AG04449 (cell line): ENCODE measurements at regions of chr5 and their contacts with region 1.

Region 1: DNA sequence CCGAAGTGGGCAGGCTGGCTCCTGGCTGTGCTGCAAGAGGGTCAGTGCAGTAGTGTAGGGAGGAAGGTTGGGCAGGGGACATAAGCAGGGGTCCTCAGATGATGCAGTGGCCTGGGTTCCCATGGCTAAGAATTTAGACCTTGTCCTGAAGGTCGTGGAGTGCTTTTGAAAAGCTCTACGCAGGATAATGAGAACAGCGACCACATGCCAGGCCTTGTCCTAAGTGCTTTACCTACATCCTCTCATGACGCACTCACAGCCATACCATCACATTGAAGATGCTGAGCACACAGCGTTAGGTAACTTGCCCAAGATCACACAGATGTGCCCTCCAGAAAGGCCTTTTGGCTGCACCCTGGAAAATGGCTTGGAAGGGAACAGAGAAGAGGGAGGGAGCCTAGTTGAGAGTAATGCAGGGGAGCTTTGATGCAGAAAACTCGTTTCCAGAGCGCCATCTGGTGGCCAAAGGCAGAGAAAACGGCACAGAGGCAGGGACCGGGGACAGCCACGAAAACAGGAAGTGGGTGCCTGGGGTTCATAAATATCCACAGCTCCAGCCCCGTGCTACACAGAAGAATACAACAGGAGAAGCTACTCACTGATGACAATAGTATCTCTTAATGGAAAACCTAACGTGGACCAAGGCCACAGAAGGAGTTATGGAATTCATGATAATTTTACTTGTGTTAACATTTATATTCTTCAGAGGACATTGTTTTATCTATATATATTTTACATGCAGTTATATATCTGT is 2.6 kb upstream of the PCDH12 start:
- DNase-seq: peak; percentile 16
- H3K4me3 ChIP-seq: no peak overlapping the region
- CTCF ChIP-seq: peak; percentile 87

Region 2: GRCh38 chr5:141664732-141665461 is 295.7 kb before region 1 on chr5:
- CTCF ChIA-PET with region 1: interaction called, 132 read pairs
- POLR2A ChIA-PET with region 1: no interaction called
- DNase-seq: no peak
- H3K4me3 ChIP-seq: no peak overlapping the region
- CTCF ChIP-seq: peak; percentile 90

Region 3: GRCh38 chr5:141883892-141884318 is 76.7 kb before region 1 on chr5:
- CTCF ChIA-PET with region 1: interaction called, 115 read pairs
- POLR2A ChIA-PET with region 1: no interaction called
- DNase-seq: no peak
- H3K4me3 ChIP-seq: no peak overlapping the region
- CTCF ChIP-seq: no peak

Region 4: DNA sequence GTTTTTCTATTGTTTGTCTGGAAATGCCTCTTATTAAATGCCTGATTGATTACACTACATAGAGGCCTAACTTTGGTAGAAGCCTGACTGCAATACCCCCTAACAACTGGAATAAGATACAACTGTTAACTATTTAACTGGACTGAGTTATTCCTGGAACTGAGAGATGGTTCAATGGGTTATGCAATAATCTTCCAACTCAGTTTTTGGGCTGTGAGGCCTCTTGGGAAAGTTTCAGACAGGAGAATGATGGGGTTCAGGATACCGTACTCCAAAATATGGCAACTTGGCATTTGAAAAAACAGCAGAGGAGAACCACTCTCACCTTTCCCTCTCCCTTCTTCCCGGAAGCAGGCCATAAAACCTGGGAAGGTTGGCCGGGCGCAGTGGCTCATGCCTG is 63.2 kb before region 1 on chr5:
- CTCF ChIA-PET with region 1: interaction called, 12 read pairs
- POLR2A ChIA-PET with region 1: no interaction called
- DNase-seq: no peak
- H3K4me3 ChIP-seq: no peak overlapping the region
- CTCF ChIP-seq: no peak

Region 5: GRCh38 chr5:141923448-141924352 is 36.9 kb before region 1 on chr5 and contains the start of gene DELE1:
- CTCF ChIA-PET with region 1: interaction called, 16 read pairs
- POLR2A ChIA-PET with region 1: no interaction called
- DNase-seq: peak; percentile 70
- H3K4me3 ChIP-seq: peak within 1 kb of the TSS; percentile 85
- CTCF ChIP-seq: no peak

Region 6: DNA sequence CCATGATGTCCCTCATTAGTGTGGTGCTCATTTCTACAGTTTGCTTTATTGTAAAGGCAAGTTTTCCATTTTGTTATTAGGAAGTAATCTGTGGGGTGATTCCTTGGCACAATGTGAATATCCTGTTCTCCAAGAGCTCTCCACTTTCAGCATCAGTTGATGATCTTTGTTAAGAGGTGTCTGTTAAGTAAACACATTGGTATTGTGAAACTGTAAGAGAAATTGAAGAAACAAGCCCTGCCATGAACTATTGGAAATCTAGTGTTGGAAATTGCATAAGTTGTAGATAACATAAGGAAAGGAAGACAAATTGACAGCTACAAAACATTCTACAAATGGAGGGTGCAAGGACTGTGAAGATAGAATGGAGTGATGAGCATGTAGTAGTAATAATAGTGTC is 25.4 kb after region 1 on chr5:
- CTCF ChIA-PET with region 1: interaction called, 10 read pairs
- POLR2A ChIA-PET with region 1: no interaction called
- DNase-seq: no peak
- H3K4me3 ChIP-seq: no peak overlapping the region
- CTCF ChIP-seq: no peak

Region 7: GRCh38 chr5:142034994-142035393 is 74.4 kb after region 1 on chr5:
- CTCF ChIA-PET with region 1: no interaction called
- POLR2A ChIA-PET with region 1: no interaction called
- DNase-seq: no peak
- H3K4me3 ChIP-seq: no peak overlapping the region
- CTCF ChIP-seq: no peak

Region 8: GRCh38 chr5:142133330-142134206 is 172.9 kb after region 1 on chr5:
- CTCF ChIA-PET with region 1: no interaction called
- POLR2A ChIA-PET with region 1: no interaction called
- DNase-seq: no peak
- H3K4me3 ChIP-seq: no peak overlapping the region
- CTCF ChIP-seq: no peak

Region 9: GRCh38 chr5:143506881-143507551 is 1546.4 kb after region 1 on chr5:
- CTCF ChIA-PET with region 1: no interaction called
- POLR2A ChIA-PET with region 1: no interaction called
- DNase-seq: peak; percentile 80
- H3K4me3 ChIP-seq: no peak overlapping the region
- CTCF ChIP-seq: no peak